SK-N-SH (cell line): ENCODE measurements at regions of chr11 and their contacts with region 1.

Region 1: GRCh38 chr11:75248690-75249268 is 8.2 kb downstream of the TPBGL start:
- DNase-seq: peak; percentile 90
- H3K4me3 ChIP-seq: peak overlapping the region in 1 of 2 experiments; percentile 54; a peak in 1 of 4 replicates
- H3K27ac ChIP-seq: no peak overlapping the region
- H3K4me1 ChIP-seq: peaks cover 0 to 5% of the 10 kb centered on the region in 2 experiments; a peak in 1 of 4 replicates
- H3K27me3 ChIP-seq: peaks cover 20% of the 10 kb centered on the region
- CTCF ChIP-seq: peak; percentile 100
- EP300 ChIP-seq: no peak
- RAD21 ChIP-seq: peak; percentile 100

Region 2: DNA sequence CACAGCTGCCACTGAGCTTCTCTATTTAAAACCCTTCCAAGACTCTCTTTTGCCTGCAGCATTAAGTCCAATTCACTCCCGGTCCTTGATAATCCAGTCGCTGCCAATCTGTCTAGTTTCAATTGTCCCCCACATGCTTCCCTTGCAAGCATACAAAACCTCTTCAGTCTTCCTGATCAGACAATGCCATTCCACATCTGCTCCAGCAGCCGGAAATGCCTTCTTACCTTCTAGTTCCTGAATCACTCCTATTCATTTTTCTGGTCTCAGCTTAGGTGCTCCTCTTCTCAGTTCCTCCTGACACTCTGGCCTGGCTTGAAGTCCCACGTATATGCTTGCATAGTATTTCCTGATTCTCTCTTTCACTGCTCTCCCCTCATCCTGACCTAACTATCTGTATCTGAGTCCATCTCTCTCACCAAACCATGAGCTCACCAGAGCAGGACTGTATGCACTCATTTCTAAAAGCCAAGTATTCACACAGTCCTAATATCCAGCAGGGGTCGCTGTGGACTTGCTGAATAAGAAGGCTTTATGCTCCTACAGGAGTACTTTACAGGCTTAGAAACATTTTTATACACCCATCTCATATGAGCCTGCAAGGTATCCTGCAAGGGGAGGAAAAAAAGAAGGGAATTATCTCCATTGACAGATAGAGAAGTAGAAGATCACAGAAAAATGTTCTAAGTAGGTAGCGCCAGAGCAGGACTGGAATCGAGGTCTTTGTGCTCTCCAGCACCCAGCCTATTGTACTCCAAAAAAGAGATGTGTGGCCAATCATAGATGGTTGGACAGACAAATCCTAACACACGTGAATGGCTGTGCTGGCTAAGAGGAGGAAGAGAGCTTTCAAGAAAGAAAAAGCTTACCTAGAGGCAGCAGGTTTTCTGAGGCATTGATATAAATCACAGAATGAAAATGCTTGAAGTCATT is 319.1 kb before region 1 on chr11:
- CTCF ChIA-PET with region 1: interaction called, 113 read pairs
- POLR2A ChIA-PET with region 1: no interaction called
- DNase-seq: peak; percentile 58
- H3K4me3 ChIP-seq: no peak overlapping the region
- H3K27ac ChIP-seq: no peak overlapping the region; a peak in 1 of 4 replicates
- H3K4me1 ChIP-seq: peaks cover 0 to 12% of the 10 kb centered on the region in 2 experiments; a peak in 2 of 4 replicates
- H3K27me3 ChIP-seq: no peaks in the 10 kb centered on the region
- CTCF ChIP-seq: peak; percentile 95
- EP300 ChIP-seq: no peak
- RAD21 ChIP-seq: peak; percentile 93

Region 3: DNA sequence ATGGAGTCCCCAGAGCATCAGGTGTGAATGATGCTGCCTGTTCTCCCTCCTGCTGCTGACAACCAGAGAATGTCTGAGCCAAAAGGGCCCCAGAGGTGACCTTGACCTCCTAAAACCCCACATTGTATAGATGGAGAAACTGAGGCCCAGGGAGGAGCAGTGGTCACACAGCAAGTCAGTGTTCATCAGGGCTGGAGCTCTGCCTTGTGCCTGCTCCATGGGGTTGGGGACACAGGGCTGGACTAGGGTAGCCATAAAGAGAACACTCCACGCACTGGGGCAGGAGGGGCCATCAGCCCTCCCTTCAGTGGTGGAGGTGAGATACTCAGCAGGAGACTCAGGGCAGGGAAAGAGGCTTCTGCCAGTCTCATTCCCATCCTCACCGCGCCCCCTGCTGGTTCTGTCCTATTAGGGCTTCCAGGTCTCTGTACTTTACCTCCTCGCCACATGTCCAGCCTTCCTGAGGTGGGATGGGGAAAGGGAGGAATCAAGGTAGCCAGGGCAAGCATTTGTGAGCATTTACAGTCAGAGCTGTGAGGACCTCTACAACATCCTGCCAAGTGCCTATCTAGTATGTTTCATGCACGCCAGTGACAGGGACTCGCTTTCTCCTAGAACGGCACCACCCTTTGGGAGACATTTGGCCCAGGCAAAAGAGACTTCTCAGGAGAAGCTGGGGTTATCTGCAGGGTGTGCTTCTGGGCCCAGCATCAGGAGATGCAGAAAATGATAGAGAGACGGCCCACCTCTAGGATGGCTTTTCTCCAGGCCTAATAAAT is 216.8 kb before region 1 on chr11:
- CTCF ChIA-PET with region 1: interaction called, 258 read pairs
- POLR2A ChIA-PET with region 1: no interaction called
- DNase-seq: peak; percentile 68
- H3K4me3 ChIP-seq: no peak overlapping the region
- H3K27ac ChIP-seq: peak overlapping the region in 1 of 2 experiments; percentile 52; a peak in 2 of 4 replicates
- H3K4me1 ChIP-seq: peaks cover 6 to 11% of the 10 kb centered on the region in 2 experiments; a peak in 2 of 4 replicates
- H3K27me3 ChIP-seq: no peaks in the 10 kb centered on the region
- CTCF ChIP-seq: peak; percentile 73
- EP300 ChIP-seq: no peak
- RAD21 ChIP-seq: peak; percentile 75

Region 4: GRCh38 chr11:75133976-75134375 is 114.8 kb before region 1 on chr11:
- CTCF ChIA-PET with region 1: interaction called, 1,115 read pairs
- POLR2A ChIA-PET with region 1: no interaction called
- DNase-seq: no peak
- H3K4me3 ChIP-seq: no peak overlapping the region
- H3K27ac ChIP-seq: no peak overlapping the region
- H3K4me1 ChIP-seq: no peaks in the 10 kb centered on the region; a peak in 1 of 4 replicates
- H3K27me3 ChIP-seq: peaks cover 13% of the 10 kb centered on the region; the same call in 1 of the 2 replicates
- CTCF ChIP-seq: no peak
- EP300 ChIP-seq: no peak
- RAD21 ChIP-seq: no peak

Region 5: GRCh38 chr11:75195121-75195551 is 53.6 kb before region 1 on chr11:
- CTCF ChIA-PET with region 1: interaction called, 16 read pairs
- POLR2A ChIA-PET with region 1: no interaction called
- DNase-seq: peak; percentile 71
- H3K4me3 ChIP-seq: no peak overlapping the region
- H3K27ac ChIP-seq: peak overlapping the region in 1 of 2 experiments; percentile 4; a peak in 1 of 4 replicates
- H3K4me1 ChIP-seq: peaks cover 0 to 26% of the 10 kb centered on the region in 2 experiments; a peak in 1 of 4 replicates
- H3K27me3 ChIP-seq: no peaks in the 10 kb centered on the region
- CTCF ChIP-seq: no peak
- EP300 ChIP-seq: peak in 1 of 2 experiments; percentile 19; a peak in 1 of 4 replicates
- RAD21 ChIP-seq: no peak

Region 6: GRCh38 chr11:75233742-75234172 is 15.0 kb before region 1 on chr11:
- CTCF ChIA-PET with region 1: interaction called, 49 read pairs
- POLR2A ChIA-PET with region 1: no interaction called
- DNase-seq: no peak
- H3K4me3 ChIP-seq: no peak overlapping the region
- H3K27ac ChIP-seq: no peak overlapping the region
- H3K4me1 ChIP-seq: peaks cover 0 to 2% of the 10 kb centered on the region in 2 experiments; a peak in 1 of 4 replicates
- H3K27me3 ChIP-seq: no peaks in the 10 kb centered on the region
- CTCF ChIP-seq: no peak
- EP300 ChIP-seq: no peak
- RAD21 ChIP-seq: no peak

Region 7: GRCh38 chr11:75388386-75389275 is 139.9 kb after region 1 on chr11:
- CTCF ChIA-PET with region 1: interaction called, 11 read pairs
- POLR2A ChIA-PET with region 1: no interaction called
- DNase-seq: peak; percentile 85
- H3K4me3 ChIP-seq: peak overlapping the region in 1 of 2 experiments; percentile 35; a peak in 1 of 4 replicates
- H3K27ac ChIP-seq: no peak overlapping the region
- H3K4me1 ChIP-seq: peaks cover 0 to 9% of the 10 kb centered on the region in 2 experiments; a peak in 1 of 4 replicates
- H3K27me3 ChIP-seq: no peaks in the 10 kb centered on the region
- CTCF ChIP-seq: peak; percentile 89
- EP300 ChIP-seq: no peak
- RAD21 ChIP-seq: peak; percentile 91